CD4-positive, alpha-beta memory T cell (primary cell): ENCODE measurements at regions of chr7 and their contacts with region 1.

Region 1: DNA sequence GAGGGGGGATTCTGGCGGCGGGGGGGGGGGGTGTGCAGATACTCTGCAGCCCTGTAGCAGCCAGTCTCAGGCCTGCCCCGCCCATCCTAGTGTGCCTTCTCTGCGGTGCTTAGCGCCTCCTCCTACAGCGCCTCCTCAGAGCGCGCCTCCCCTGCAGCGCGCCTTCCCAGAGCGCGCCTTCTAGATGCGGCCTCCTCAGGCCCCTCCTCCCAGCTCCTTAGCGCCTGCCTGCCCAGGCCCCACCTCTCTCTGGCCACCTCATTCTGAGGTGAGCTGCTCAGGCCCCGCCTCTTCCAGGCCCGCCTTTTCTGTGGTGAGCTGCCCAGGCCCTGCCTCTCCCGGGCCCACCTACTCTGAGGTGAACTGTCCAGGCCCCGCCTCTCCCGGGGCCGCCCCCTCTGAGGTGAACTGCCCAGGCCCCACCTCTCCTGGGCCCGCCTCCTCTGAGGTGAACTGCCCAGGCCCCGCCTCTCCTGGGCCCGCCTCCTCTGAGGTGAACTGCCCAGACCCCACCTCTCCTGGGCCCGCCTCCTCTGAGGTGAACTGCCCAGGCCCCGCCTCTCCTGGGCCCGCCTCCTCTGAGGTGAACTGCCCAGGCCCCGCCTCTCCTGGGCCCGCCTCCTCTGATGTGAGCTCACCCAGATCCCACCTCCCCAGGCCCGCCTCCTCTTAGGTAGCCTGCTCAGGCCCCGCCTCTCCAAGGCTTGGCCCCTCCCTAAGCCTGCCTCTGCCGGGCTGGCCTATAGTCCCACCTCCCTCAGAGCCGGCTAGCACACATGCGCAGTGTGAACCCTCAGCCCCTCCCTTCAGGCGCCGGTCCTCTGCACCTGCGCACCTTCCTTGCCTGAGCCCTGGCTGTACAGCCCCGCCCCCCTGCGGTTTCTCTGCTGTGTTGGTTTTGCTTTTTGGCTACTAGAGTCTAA is 2.1 kb upstream of the SGCE start:
- DNase-seq: peak; percentile 92 to 98 (median 97)
- H3K4me3 ChIP-seq: peak overlapping the region in 1 of 2 donors; percentile 30
- H3K4me3 Mint-ChIP-seq: peak overlapping the region; percentile 81 to 95 (median 88)
- H3K27ac ChIP-seq: no peak overlapping the region
- H3K27ac Mint-ChIP-seq: peak overlapping the region in 6 of 7 donors; percentile 74 to 92 (median 84)
- H3K4me1 ChIP-seq: peaks cover 25% of the 10 kb centered on the region
- H3K4me1 Mint-ChIP-seq: peaks cover 8 to 28% (median 19%) of the 10 kb centered on the region in 4 donors
- H3K27me3 ChIP-seq: peaks cover 16% of the 10 kb centered on the region
- H3K27me3 Mint-ChIP-seq: peaks cover 5 to 16% of the 10 kb centered on the region in 2 donors

Region 2: GRCh38 chr7:92809397-92810241 is 1848.4 kb before region 1 on chr7:
- CTCF ChIA-PET with region 1: no interaction called
- POLR2A ChIA-PET with region 1: no interaction called
- intact Hi-C with region 1: loop called (anchors 10 kb)
- DNase-seq: peak; percentile 68 to 81 (median 74)
- H3K4me3 ChIP-seq: peak overlapping the region in 1 of 2 donors; percentile 28
- H3K4me3 Mint-ChIP-seq: peak overlapping the region; percentile 66 to 87 (median 80)
- H3K27ac ChIP-seq: peak overlapping the region; percentile 46
- H3K27ac Mint-ChIP-seq: peak overlapping the region; percentile 69 to 96 (median 81)
- H3K4me1 ChIP-seq: peaks cover 37% of the 10 kb centered on the region
- H3K4me1 Mint-ChIP-seq: peaks cover 32 to 53% (median 39%) of the 10 kb centered on the region in 4 donors
- H3K27me3 ChIP-seq: no peaks in the 10 kb centered on the region
- H3K27me3 Mint-ChIP-seq: no peaks in the 10 kb centered on the region

Region 3: DNA sequence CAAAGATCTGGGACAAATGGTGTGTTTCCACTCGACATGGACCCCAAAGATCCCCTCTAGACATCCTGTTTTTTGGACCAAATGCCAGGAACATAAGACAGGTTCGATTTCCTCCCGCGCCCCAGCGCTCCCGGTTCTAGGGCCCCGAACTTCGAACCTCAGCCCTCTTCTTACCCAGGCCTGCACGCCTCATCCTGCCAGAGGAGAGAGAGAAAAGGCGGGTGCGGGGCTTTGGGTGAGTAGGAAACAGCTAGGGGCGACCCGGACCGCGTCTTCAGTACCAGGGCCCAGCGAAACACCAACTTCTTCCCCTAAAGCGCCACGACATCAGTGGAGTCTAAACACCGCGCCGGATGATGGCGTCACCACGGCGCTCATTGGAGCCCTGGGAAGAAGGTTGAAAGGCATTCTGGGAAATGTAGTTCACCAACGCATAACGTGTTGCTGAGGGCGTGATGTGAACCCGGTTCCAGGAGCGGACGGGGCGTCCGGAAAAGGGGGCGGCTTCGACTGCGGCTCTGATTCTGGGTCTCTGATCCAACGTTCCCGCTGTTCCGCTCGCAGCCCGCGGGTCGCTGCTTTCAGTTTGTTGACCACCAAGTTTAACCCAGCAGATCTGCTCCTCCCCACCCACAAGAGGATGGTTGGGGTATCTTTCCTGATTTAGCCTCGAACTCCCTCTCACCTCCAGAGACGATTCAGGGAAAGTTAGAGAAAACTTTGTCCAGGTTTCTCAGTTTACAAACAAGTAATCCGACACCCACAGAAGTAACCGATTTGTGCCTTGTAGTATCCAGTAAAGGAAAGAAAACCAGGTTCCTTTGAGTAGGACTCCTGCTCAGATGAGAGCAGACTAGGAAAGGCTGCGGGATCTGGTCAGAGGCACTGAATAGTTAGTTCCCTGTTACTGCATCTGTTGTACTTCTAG is 653.7 kb before region 1 on chr7 and contains the start of gene BET1:
- CTCF ChIA-PET with region 1: no interaction called
- POLR2A ChIA-PET with region 1: no interaction called
- intact Hi-C with region 1: loop called (anchors 2 kb)
- DNase-seq: peak; percentile 91 to 96 (median 92)
- H3K4me3 ChIP-seq: peak within 1 kb of the TSS; percentile 95 to 96
- H3K4me3 Mint-ChIP-seq: peak within 1 kb of the TSS; percentile 97 to 99 (median 99)
- H3K27ac ChIP-seq: peak within 1 kb of the TSS; percentile 90
- H3K27ac Mint-ChIP-seq: peak within 1 kb of the TSS; percentile 96 to 100 (median 99)
- H3K4me1 ChIP-seq: peaks cover 22% of the 10 kb centered on the region
- H3K4me1 Mint-ChIP-seq: peaks cover 25 to 51% (median 36%) of the 10 kb centered on the region in 4 donors
- H3K27me3 ChIP-seq: no peaks in the 10 kb centered on the region
- H3K27me3 Mint-ChIP-seq: peaks cover 2 to 5% of the 10 kb centered on the region in 2 donors
- total RNA-seq, gene BET1: 40.8 to 45.7 TPM

Region 4: DNA sequence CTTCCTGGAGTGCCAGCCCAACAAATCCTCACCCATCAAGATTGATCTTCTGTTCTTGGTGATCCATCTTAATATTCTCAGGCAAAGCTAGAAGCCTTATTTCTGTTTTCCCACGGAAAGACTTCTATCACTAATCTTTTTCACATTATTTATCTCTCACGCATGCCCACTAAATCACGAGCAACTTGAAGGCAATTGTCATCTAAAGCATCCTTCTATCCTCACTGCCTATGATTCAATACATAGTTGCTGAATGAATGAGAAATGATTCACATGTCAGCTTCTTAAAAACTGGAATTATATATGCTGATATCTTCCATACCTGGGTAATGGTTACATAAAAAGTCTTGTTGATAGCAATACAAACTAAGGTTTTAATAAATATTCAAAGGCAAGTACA is 275.9 kb before region 1 on chr7:
- CTCF ChIA-PET with region 1: no interaction called
- POLR2A ChIA-PET with region 1: no interaction called
- intact Hi-C with region 1: no loop called
- DNase-seq: no peak
- H3K4me3 ChIP-seq: no peak overlapping the region
- H3K4me3 Mint-ChIP-seq: no peak overlapping the region
- H3K27ac ChIP-seq: no peak overlapping the region
- H3K27ac Mint-ChIP-seq: no peak overlapping the region
- H3K4me1 ChIP-seq: no peaks in the 10 kb centered on the region
- H3K4me1 Mint-ChIP-seq: no peaks in the 10 kb centered on the region
- H3K27me3 ChIP-seq: no peaks in the 10 kb centered on the region
- H3K27me3 Mint-ChIP-seq: peaks cover 1 to 2% of the 10 kb centered on the region in 2 donors

Region 5: DNA sequence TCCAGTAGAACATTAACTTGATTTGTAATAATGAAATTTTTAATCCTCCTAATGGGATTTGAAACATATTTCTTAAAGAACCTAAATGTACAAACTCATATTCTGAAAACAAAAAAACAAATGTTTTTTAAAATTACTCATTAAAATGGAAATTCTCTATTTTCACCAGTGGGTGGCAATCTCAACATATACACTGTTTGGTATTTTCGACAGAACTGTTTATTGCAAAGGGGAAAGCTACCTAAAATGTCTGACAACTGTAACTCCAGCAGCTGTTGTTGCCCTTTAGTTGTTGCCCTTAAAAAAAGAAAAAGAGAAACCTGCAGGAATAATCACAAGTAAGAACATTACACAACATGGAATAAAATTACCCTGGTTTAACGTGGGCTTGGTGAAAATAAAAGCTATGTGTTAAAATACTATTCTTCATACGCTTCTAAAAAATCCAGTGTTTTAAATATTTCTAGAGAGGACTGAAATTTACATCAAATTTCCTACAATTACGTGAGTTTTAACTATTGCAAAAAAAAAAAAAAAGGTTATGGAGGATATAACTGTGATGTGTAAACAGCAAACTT is 208.8 kb before region 1 on chr7:
- CTCF ChIA-PET with region 1: interaction called, 3 read pairs
- POLR2A ChIA-PET with region 1: no interaction called
- intact Hi-C with region 1: loop called (anchors 5 kb)
- DNase-seq: peak in 4 of 5 donors; percentile 21 to 26 (median 24)
- H3K4me3 ChIP-seq: no peak overlapping the region
- H3K4me3 Mint-ChIP-seq: peak overlapping the region in 1 of 8 donors; percentile 26
- H3K27ac ChIP-seq: no peak overlapping the region
- H3K27ac Mint-ChIP-seq: no peak overlapping the region
- H3K4me1 ChIP-seq: no peaks in the 10 kb centered on the region
- H3K4me1 Mint-ChIP-seq: no peaks in the 10 kb centered on the region
- H3K27me3 ChIP-seq: no peaks in the 10 kb centered on the region
- H3K27me3 Mint-ChIP-seq: peaks cover 4 to 11% of the 10 kb centered on the region in 2 donors

Region 6: DNA sequence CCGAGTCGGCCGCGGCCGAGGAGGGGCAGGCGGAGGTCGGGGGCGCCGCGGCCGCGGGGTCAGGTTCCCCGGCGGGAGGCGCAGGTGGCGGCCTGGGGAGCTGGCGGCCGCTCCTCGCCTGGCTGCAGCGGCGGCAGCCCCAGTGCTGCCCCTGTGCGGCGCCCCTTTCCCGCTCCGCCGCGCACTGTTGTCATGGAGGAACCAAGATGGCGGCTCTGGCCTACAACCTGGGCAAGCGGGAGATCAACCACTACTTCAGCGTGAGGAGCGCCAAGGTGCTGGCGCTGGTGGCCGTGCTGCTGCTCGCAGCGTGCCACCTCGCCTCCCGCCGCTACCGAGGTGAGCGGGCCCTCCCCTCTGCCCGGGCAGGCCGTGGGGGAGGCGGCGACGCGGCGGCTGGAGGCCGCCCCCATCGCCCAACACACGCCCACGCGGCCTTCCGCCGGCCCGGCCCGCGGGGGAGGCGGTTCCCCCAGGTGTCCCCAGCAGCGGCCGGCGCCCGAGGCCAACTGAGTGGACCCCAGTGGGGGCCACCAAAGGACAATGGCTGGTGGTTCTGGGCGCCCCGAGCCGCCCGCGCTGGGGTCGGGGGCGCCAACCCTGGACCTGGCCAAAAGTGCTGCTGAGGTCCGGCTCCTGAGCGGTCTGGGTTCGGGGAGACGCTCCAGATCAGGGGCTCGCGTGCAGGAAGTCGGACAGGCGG is 148.0 kb before region 1 on chr7:
- CTCF ChIA-PET with region 1: interaction called, 3 read pairs
- POLR2A ChIA-PET with region 1: interaction called, 13 read pairs
- intact Hi-C with region 1: loop called (anchors 1 kb)
- DNase-seq: peak; percentile 68 to 79 (median 73)
- H3K4me3 ChIP-seq: peak overlapping the region; percentile 54 to 88
- H3K4me3 Mint-ChIP-seq: peak overlapping the region; percentile 83 to 94 (median 90)
- H3K27ac ChIP-seq: peak overlapping the region; percentile 83
- H3K27ac Mint-ChIP-seq: peak overlapping the region; percentile 71 to 94 (median 91)
- H3K4me1 ChIP-seq: peaks cover 43% of the 10 kb centered on the region
- H3K4me1 Mint-ChIP-seq: peaks cover 38 to 51% (median 45%) of the 10 kb centered on the region in 4 donors
- H3K27me3 ChIP-seq: no peaks in the 10 kb centered on the region
- H3K27me3 Mint-ChIP-seq: no peaks in the 10 kb centered on the region